ENCODE measurements at regions of chr13 and their contacts with region 1.

Region 1: DNA sequence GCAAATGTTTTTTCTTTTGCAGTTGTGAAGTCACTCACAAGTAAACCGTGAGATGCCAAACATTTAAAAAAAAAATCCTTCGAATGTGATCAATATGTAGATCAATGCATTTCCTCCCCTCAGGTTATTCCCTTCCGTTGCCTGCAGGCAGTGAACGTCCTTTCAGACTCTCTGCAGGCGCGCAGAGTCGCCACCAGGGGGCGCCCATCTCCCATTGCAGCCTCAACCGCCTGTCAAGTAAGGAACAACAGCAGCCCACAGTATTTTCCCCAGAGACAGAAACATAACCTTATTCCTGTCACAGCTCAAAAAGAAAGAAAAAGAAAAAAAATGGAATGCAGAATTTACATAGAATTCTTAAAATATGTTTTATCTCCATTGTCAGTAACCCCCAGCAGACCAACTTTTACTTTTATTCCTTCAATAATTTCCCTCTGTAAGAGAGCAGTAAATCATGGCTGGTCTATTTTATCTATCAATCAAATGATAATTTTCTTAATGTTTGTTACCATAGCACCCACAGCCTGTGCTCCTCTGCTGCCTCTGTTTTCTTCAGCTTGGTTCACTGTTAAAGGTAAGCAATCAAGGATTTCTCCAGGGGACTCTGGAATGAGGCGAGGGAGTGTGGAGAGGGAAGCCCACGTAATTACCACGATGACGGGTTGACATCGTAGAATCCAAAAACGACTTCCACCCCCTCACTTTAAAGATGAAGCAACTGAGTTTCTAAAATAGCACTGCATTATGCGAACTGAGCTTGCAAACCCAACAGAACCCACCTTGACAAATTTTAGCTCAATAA is 637.6 kb upstream of the ARGLU1 start:
- ATAC-seq: peak; percentile 60 to 97 (median 94)
- H3K4me3 ChIP-seq: peak overlapping the region in 1 of 5 donors; percentile 0
- H3K27ac ChIP-seq: no peak overlapping the region
- H3K4me1 ChIP-seq: peaks cover 4 to 9% of the 10 kb centered on the region in 2 donors

Region 2: DNA sequence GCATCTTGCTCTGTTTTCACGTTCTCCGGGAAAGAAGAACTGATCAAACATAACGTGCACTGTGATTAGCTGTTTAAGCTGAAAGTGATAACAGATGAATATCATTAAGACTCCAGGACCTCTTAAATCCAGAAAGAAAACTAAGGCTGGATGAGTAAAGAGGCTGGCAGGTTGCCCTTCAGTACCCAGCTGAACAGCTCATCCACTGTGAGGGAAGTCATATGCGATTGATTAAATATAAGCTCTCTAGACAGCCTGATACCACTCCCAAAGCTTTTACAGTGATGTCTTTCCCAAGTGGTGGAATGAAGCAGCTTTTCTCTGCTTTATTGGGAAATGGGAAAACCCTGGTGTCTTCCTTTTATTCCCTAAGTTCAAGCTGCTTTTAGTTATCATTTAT is 786.9 kb before region 1 on chr13:
- in situ Hi-C with region 1: no loop called
- ATAC-seq: peak in 2 of 8 experiments; percentile 51 to 52
- H3K4me3 ChIP-seq: no peak overlapping the region
- H3K27ac ChIP-seq: no peak overlapping the region
- H3K4me1 ChIP-seq: peaks cover 12 to 18% of the 10 kb centered on the region in 2 donors

Region 3: DNA sequence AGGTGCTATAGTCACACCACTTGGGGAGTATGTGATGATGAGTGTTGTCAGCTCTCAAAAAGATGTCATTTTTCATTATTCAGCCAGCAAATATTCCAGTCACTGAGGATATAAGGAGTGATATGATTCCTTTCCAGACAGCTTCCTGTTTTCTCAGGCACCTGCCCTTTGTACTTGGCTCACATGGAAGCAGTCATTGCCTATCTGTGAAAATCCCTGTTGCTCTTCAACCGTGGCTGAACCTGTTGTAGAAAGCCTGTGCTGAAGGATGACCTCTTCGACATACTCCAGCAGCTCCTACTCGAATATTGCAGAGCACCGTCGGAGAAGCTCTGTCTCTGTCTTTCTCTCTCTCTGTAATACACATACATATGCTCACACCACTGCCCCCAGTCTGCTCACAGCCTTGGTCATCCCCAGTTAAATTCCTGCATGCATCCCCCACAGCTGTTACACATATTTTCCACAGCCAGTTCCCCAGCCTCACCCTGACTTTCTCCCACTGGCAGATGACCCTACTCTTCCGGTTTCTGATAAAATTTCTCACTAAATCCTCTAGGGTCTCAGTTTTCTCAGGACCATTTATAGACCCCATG is 433.4 kb before region 1 on chr13:
- in situ Hi-C with region 1: no loop called
- ATAC-seq: no peak
- H3K4me3 ChIP-seq: no peak overlapping the region
- H3K27ac ChIP-seq: no peak overlapping the region
- H3K4me1 ChIP-seq: no peaks in the 10 kb centered on the region

Region 4: GRCh38 chr13:107867701-107868661 is 662.5 kb after region 1 on chr13:
- in situ Hi-C with region 1: loop called in 6 of 9 experiments (anchors 10 to 25 kb)
- ATAC-seq: peak; percentile 59 to 77 (median 74)
- H3K4me3 ChIP-seq: peak overlapping the region; percentile 47 to 94 (median 66)
- H3K27ac ChIP-seq: peak overlapping the region; percentile 56 to 62
- H3K4me1 ChIP-seq: peaks cover 0 to 4% of the 10 kb centered on the region in 2 donors